Ovary (tissue), 10 donors: ENCODE measurements at regions of chr17 and their contacts with region 1.

Region 1: DNA sequence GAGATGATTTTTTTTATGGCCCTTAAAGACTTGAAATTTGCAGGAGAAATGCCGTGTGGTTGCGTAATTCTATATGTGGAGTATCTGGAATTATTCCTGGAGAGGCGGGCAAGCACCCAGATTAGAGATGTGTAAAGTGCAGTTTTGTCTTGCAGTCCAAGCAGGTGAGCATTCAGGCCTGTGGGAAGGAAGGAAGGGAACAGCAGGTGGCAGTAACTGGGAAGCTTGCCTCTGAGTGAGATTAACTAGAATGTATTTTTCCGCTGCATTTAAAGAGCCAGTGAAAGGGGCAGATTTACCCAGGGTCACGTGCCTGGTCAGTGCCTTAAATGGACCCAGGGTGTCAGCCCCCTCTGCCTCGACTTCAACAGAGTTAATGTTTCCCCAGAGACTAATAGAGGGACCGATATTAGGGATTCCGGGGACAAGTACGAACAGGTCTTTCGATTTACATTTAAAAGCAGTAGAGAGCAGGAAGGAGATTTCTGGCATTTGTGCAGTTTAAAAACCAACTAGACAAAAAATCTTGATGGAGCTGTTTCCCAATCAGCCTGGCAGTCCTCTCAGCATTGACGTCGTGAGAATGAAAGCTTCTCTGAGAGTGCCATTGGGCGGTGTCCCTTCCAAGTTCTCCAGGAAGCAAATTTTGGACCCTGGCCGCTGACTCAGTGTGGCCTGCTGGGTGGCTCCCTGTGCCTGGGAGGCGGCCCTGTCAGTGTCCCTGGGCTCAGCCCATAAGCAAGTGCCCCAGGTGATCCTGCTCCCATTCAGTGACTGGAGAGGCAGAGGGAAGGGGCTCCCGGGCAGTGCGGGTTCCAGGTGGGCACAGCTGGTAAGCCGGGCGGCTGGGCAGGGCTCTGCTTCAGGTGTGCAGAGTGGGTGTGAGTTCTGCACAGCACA is 38.2 kb downstream of the KSR1 start:
- DNase-seq: peak in 1 of 5 donors; percentile 37
- H3K4me3 ChIP-seq: no peak overlapping the region
- H3K27ac ChIP-seq: no peak overlapping the region
- H3K4me1 ChIP-seq: peaks cover 9% of the 10 kb centered on the region
- H3K27me3 ChIP-seq: no peaks in the 10 kb centered on the region
- CTCF ChIP-seq: no peak
- EP300 ChIP-seq: no peak
- POLR2A ChIP-seq: no peak

Region 2: DNA sequence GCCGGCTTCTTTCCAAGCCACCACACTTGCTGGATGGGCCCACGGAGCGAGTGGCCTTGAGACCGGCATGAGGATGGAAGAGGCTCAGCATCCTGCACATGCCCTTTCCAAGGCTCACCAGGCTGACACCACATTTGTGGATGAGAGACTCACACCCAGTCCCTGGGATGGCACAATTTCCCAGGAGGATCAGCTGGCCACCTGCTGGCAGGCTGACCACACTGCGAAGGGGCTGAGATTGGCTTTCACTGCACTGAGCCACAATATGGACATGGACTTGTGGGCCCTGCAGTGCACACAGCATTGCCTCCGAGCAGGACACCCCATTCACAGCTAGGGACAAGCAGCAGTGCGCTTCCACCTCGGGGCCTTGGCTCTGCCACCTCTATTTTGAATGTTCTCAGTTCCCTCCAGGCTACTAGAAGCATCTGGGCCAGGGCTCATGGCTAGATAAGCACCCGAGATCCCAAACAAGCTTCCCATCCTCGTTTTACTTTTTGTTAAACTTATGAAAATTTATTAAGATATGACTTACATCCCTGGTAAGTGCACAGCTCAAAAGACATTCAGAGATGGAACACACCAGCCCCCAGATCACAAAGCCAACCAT is 63.5 kb before region 1 on chr17:
- intact Hi-C with region 1: loop called in 1 of 4 experiments (anchors 10 kb)
- DNase-seq: no peak
- H3K4me3 ChIP-seq: no peak overlapping the region
- H3K27ac ChIP-seq: no peak overlapping the region
- H3K4me1 ChIP-seq: no peaks in the 10 kb centered on the region
- H3K27me3 ChIP-seq: no peaks in the 10 kb centered on the region
- CTCF ChIP-seq: peak in 1 of 3 donors; percentile 17
- EP300 ChIP-seq: no peak
- POLR2A ChIP-seq: no peak

Region 3: DNA sequence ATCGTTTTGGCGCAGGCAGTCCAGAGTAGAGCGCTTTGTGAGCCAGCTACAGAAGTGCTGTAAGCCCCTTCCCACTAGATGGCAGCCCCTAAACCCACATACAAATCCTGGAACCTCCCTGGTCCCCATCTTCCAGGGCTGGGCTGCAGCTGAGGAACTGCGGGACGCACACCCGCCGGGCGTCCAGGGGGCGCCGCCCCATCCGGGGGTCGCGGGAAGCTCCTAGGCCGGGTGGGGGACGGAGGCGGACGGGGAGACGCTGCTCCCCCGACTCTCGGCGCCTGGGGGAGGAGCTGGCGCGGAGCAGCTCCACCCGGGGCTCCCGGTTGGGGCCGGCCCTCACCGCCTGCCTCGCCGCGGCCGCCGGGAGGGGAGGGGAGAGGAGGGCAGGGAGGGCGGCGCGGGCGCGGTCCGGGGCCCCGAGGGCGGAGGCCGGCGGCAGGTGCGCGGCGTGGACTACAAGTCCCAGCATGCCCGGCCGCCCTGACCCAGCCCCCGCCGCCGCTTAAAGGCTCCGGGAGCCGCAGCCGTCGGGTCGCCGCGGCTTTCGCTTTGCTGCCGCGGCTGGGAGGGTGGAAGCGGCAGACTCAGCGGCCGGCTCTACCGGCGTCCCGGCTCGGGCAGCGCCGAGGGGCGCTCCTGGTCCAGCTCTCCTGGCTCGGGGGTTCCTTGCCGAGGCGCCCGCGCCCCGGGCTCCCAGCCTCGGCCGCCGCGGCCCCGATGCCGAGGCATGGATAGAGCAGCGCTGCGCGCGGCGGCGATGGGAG is 38.3 kb before region 1 on chr17 and contains the start of gene KSR1:
- intact Hi-C with region 1: no loop called
- DNase-seq: peak; percentile 83 to 88 (median 85)
- H3K4me3 ChIP-seq: peak within 1 kb of the TSS; percentile 85
- H3K27ac ChIP-seq: peak within 1 kb of the TSS; percentile 75 to 98
- H3K4me1 ChIP-seq: peaks cover 6% of the 10 kb centered on the region
- H3K27me3 ChIP-seq: no peaks in the 10 kb centered on the region
- CTCF ChIP-seq: peak; percentile 49 to 61 (median 56)
- EP300 ChIP-seq: no peak
- POLR2A ChIP-seq: peak; percentile 67
- total RNA-seq, gene KSR1: 29.2 to 84.8 (median 39.5) TPM

Region 4: GRCh38 chr17:27586203-27586721 is 91.8 kb after region 1 on chr17:
- intact Hi-C with region 1: no loop called
- DNase-seq: no peak
- H3K4me3 ChIP-seq: no peak overlapping the region
- H3K27ac ChIP-seq: no peak overlapping the region
- H3K4me1 ChIP-seq: no peaks in the 10 kb centered on the region
- H3K27me3 ChIP-seq: no peaks in the 10 kb centered on the region
- CTCF ChIP-seq: no peak
- EP300 ChIP-seq: no peak
- POLR2A ChIP-seq: no peak